Colonic mucosa (tissue), 4 donors: ENCODE measurements at regions of chr20 and their contacts with region 1.

Region 1: DNA sequence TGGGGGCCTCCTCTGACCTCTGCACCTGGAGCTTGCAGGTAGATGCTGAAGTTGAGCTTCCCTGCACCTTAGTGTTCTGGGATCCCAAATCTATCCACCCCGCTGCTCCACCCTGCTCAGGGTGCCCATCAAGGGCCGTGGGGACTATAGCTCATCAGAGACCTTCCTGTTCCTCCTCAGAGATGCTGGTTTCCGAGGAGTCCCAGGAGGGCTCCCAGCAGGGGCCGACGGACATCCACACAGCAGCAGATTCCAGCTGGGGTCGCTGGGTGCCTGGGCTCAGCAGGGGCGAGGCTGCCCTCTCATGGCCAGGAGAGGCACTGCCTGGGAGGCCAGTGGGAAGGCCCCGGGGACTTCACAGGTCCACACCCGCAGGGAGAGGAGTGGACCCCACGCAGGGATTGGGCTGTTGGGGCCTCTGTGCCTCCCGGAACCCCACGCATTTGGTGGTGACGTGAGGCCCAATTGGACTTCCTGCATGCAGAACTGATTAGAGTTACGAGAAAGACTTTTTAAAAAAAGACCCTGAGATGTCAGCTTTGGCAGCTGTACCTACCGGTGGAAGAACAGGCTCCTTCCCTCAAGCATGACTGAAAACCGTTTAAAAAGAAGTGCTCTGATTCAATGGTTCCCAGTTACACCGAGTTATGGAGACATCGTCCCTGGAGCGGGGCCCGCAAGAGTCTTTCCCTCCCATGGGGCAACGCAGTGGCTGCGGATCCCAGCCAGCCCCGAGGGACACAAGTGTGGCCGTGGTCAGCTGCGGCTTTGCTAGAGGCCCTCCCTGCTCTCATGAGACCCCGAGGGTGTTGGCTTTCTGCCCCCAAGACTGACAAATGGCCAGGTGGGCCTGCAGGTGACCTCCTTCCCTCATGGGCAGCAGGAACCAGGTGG is 25.3 kb upstream of the SLCO4A1 start:
- DNase-seq: peak; percentile 71
- H3K4me3 ChIP-seq: no peak overlapping the region
- H3K27ac ChIP-seq: no peak overlapping the region
- H3K4me1 ChIP-seq: no peaks in the 10 kb centered on the region
- H3K27me3 ChIP-seq: no peaks in the 10 kb centered on the region
- CTCF ChIP-seq: peak; percentile 98

Region 2: GRCh38 chr20:62409931-62410745 is 206.8 kb before region 1 on chr20:
- intact Hi-C with region 1: loop called (anchors 10 kb)
- DNase-seq: peak; percentile 81
- H3K4me3 ChIP-seq: no peak overlapping the region
- H3K27ac ChIP-seq: peak overlapping the region; percentile 85
- H3K4me1 ChIP-seq: peaks cover 30% of the 10 kb centered on the region
- H3K27me3 ChIP-seq: no peaks in the 10 kb centered on the region
- CTCF ChIP-seq: peak; percentile 31

Region 3: DNA sequence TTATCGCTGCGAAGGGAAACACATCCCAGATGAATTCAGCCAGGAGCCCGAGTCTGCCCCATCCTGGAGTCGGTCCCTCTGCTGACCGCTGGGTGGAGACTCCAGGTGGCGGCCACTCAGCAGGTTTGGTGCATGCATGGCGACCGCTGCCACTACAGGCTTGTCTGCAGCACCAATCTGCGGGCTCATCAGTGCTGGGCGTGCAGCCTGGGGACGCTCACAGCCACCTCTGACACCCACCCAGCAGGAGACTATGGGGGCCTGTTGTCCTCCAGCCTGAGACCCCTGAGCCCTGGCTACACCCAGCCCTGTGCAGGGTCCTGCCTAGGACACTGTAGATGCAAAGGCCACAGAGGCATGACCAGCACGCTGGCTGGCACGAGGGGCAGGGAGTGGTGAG is 100.6 kb before region 1 on chr20:
- intact Hi-C with region 1: loop called (anchors 5 kb)
- DNase-seq: no peak
- H3K4me3 ChIP-seq: no peak overlapping the region
- H3K27ac ChIP-seq: no peak overlapping the region
- H3K4me1 ChIP-seq: no peaks in the 10 kb centered on the region
- H3K27me3 ChIP-seq: peaks cover 12% of the 10 kb centered on the region
- CTCF ChIP-seq: no peak

Region 4: GRCh38 chr20:62822788-62823651 is 206.0 kb after region 1 on chr20:
- intact Hi-C with region 1: no loop called
- DNase-seq: peak; percentile 82
- H3K4me3 ChIP-seq: no peak overlapping the region
- H3K27ac ChIP-seq: peak overlapping the region; percentile 18
- H3K4me1 ChIP-seq: peaks cover 11% of the 10 kb centered on the region
- H3K27me3 ChIP-seq: peaks cover 19% of the 10 kb centered on the region
- CTCF ChIP-seq: peak; percentile 50